ENCODE measurements at regions of chr5 and their contacts with region 1.

Region 1: DNA sequence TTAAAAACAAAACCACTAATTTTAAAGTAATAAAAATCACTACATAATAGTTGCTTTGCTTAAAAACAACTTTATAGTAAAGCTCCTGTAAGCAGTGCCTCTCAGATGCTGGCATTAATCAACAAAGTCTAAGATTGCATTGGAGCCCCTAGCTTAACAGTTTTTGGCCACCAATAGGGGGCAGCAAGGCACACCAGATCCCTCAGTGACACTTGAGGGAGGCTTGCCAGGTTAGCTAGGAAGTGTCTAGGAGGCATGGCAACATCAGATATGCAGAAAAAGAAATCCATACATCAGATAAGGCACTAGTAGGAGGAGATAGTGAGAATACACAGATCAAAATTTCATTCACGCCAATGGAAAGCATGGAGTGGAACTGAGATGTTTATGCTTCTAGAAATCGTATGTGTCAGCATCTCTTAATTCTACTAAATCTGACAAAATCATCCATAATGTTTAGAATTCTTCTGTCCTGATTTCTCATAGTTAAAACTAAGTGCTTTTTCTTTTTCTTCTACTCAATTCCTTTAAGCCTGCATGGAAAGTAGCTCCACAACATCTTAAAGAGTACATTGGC is 73.6 kb upstream of the PAM start:
- DNase-seq: peak; percentile 84
- H3K4me3 Mint-ChIP-seq: no peak overlapping the region
- H3K27ac Mint-ChIP-seq: no peak overlapping the region
- H3K4me1 Mint-ChIP-seq: no peaks in the 10 kb centered on the region
- H3K27me3 Mint-ChIP-seq: peaks cover 7% of the 10 kb centered on the region

Region 2: DNA sequence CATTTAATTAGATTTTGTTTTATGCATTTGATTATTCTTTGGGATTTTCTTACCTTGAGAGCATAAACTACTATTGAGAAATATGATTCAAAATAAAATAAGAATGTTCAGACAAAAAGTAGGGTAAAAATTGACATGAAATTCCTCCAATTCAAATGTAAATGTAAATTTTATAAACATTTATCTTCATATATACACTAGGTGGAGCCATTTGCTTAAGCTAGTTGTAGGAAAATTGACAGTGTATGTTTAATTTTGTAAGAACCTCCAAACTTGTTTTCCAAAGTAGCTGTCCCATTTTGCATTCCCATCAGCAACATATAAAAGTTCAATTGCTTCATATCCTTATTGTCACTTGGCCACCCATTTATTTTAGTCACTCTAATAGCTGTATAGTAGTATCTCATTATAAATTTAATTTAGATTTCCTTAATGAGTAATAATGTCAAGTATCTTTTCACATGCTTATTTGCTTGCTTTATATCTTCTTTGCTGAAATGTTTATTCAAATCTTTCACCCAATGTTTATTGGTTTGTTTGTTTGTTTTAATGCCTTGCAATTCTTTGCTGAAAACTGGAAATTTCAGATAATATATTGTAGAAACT is 145.1 kb before region 1 on chr5:
- CTCF ChIA-PET with region 1: no interaction called
- intact Hi-C with region 1: loop called (anchors 5 kb)
- DNase-seq: no peak
- H3K4me3 Mint-ChIP-seq: no peak overlapping the region
- H3K27ac Mint-ChIP-seq: no peak overlapping the region
- H3K4me1 Mint-ChIP-seq: no peaks in the 10 kb centered on the region
- H3K27me3 Mint-ChIP-seq: peaks cover 4% of the 10 kb centered on the region

Region 3: DNA sequence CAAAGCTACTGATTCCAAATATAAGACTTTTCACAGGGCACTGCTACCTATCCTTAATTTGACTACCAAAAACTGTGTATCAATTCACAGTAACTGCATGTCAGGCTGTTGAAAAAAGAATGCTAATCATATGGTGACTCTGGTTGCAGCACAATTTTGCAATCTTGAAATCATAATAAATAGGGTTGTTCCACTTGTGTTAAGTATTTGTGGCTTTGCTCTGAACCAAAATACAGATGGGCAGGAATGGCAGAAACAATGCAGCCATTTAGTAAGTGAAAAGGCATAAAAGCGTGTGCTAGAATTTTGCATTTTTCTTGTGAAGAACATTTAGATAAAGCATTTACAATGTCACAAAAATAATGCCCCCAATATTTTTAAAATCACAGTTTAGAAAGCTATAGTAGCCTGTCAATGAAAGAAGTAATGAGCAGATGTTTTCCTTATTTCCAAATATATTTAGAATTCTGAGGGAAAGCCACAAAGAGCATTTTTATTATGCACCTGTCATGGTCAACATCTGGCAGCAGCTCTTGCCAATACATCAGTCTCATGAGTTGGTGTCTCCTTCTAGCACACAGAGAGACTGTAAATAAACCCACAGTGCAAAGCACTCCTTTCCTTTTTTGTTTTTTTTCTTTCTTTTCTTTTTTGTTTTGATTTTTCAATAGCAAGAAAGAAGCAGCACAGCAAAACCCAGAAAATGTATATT is 18.8 kb after region 1 on chr5:
- CTCF ChIA-PET with region 1: interaction called, 16 read pairs
- intact Hi-C with region 1: no loop called
- DNase-seq: no peak
- H3K4me3 Mint-ChIP-seq: no peak overlapping the region
- H3K27ac Mint-ChIP-seq: no peak overlapping the region
- H3K4me1 Mint-ChIP-seq: no peaks in the 10 kb centered on the region
- H3K27me3 Mint-ChIP-seq: peaks cover 7% of the 10 kb centered on the region

Region 4: DNA sequence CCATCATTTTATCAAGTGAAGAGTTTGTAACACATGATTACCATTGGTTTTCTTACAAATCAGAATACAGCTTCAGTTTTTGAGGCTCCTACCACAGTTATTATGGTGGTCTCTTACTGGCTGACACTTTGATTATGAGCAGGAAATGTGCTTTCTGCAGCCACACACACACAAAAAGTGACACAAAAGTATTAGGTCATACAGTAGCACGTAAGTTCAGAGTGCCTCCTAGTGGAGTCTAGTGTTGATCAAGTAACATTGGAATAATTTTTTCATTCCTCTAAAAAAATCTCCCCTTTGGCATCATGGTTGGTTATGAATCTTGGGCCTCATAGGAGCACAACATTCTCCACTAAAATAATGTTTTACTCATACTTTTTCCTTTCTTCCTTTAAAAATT is 111.2 kb after region 1 on chr5:
- CTCF ChIA-PET with region 1: interaction called, 23 read pairs
- intact Hi-C with region 1: loop called (anchors 1 kb)
- DNase-seq: no peak
- H3K4me3 Mint-ChIP-seq: no peak overlapping the region
- H3K27ac Mint-ChIP-seq: no peak overlapping the region
- H3K4me1 Mint-ChIP-seq: peaks cover 20% of the 10 kb centered on the region
- H3K27me3 Mint-ChIP-seq: no peaks in the 10 kb centered on the region

Region 5: DNA sequence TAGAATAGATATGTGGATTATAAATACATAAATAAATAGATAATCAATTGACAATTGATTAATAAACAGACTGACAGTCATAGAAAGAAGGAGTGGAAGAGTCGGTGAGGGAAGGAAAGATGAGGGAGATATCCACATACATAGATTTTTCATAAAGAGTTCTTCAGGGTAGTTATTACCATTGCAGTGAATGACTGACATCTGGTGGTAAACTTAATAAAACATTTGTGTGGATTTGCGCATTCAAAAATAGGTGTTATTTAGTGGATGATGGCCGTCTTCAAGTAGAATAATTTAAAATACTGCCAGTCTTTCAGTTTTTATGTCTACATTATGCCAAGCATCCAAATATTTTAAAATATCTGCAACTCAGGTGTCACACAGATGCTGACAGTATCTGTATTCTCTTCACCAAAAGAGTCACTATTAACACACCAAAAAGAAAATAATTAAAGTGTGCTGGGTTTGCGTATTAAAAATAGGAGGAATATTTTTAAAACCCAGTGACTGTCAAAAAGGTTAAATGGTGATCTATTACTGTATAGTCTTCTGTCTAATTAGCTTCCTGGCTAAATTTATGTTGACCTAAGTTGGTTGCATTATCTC is 359.7 kb after region 1 on chr5:
- CTCF ChIA-PET with region 1: interaction called, 7 read pairs
- intact Hi-C with region 1: loop called (anchors 1 kb)
- DNase-seq: no peak
- H3K4me3 Mint-ChIP-seq: no peak overlapping the region
- H3K27ac Mint-ChIP-seq: no peak overlapping the region
- H3K4me1 Mint-ChIP-seq: no peaks in the 10 kb centered on the region
- H3K27me3 Mint-ChIP-seq: no peaks in the 10 kb centered on the region

Region 6: DNA sequence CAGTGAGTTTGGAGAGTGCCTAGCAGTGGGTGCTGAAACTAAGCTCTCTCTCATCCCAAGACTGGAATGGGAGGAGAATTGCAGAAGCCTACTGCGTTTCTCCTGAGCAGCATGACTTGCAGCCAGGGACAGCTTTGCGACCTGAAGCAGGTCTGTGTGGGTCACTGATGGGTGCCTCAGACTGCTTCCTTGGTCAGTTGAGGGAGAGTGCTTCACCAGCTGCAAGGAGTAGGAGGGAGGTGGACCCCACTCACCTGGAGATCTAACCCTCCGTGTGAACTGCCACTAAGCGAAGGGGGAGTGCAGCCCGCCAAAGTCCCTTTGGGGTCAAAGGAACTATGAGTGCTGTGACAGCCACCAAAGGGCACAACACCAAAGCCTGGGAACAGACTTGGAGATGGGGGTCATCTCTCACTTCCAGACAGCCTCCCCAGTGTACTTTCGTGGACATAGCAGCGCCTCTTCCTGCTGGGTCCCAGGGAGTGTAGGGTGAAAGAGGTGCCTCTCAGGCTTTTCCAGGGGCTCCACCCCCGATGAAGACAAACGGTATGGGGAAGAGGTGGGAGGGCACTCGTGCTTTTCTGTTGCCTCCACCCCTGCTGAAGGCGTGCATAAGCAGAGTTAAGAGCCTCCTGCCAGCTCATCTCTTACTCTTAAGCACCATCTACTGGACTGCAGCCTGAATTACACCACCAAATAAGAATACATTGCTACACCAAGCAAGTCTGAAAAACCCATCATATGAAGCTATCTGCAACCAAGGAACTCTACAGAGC is 542.8 kb after region 1 on chr5:
- CTCF ChIA-PET with region 1: interaction called, 4 read pairs
- intact Hi-C with region 1: loop called (anchors 1 kb)
- DNase-seq: peak; percentile 44
- H3K4me3 Mint-ChIP-seq: no peak overlapping the region
- H3K27ac Mint-ChIP-seq: no peak overlapping the region
- H3K4me1 Mint-ChIP-seq: no peaks in the 10 kb centered on the region
- H3K27me3 Mint-ChIP-seq: peaks cover 15% of the 10 kb centered on the region

Region 7: DNA sequence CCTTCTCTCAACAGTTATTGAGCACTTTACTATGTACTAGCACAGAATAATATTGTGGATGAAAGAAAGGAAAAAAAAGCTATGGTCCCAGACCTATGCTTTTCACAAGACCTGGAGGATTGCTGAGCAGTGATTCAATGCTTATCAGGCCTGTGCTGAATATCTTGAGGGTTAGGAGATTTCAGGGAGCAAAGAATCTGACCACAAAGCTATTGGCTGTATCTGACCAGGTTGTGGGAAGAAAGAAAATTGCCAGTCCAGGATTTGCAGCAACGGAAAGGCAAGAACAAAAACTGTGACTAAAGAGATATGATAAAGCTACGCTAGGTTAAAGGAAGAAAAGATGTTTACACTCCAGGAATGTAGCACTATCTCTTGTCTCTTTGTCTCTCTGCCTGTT is 562.2 kb after region 1 on chr5:
- CTCF ChIA-PET with region 1: no interaction called
- intact Hi-C with region 1: no loop called
- DNase-seq: no peak
- H3K4me3 Mint-ChIP-seq: no peak overlapping the region
- H3K27ac Mint-ChIP-seq: no peak overlapping the region
- H3K4me1 Mint-ChIP-seq: peaks cover 4% of the 10 kb centered on the region
- H3K27me3 Mint-ChIP-seq: peaks cover 20% of the 10 kb centered on the region

Measured in activated naive CD4-positive, alpha-beta T cell treated with anti-CD3 and anti-CD28 coated beads for 36 hours (primary cell).